GM12878 (cell line): ENCODE measurements at regions of chr1 and their contacts with region 1.

Region 1: GRCh38 chr1:216075339-216075738 is 347.9 kb downstream of the USH2A start:
- DNase-seq: no peak
- ATAC-seq: peak; percentile 68
- H3K4me3 ChIP-seq: no peak overlapping the region
- H3K27ac ChIP-seq: no peak overlapping the region
- H3K4me1 ChIP-seq: no peaks in the 10 kb centered on the region
- H3K27me3 ChIP-seq: no peaks in the 10 kb centered on the region
- CTCF ChIP-seq: no peak
- EP300 ChIP-seq: no peak
- POLR2A ChIP-seq: no peak
- RAD21 ChIP-seq: no peak

Region 2: DNA sequence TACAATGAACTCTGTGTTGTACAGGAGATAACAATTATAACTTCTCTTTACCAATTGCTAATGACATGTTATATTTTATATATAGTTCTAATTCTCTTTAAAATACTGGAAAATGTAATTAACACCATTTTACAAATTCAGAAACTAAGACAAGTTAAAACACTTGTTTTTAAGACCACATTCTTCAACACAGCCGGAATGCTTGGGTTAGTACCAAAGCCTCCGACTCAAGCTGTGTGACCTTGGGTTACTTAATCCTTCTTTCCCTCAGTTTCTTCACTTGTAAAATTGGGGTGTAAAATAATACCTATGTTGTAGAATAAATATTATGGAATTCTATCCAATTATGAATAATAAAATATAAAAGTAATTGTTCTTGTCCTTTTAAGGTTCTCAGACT is 30.8 kb before region 1 on chr1:
- CTCF ChIA-PET with region 1: no interaction called
- POLR2A ChIA-PET with region 1: no interaction called
- RAD21 ChIA-PET with region 1: no interaction called
- SMC1A ChIA-PET with region 1: no interaction called
- in situ Hi-C with region 1: no loop called
- intact Hi-C with region 1: no loop called
- DNase-seq: no peak
- ATAC-seq: no peak
- H3K4me3 ChIP-seq: no peak overlapping the region
- H3K27ac ChIP-seq: no peak overlapping the region
- H3K4me1 ChIP-seq: no peaks in the 10 kb centered on the region
- H3K27me3 ChIP-seq: no peaks in the 10 kb centered on the region
- CTCF ChIP-seq: no peak
- EP300 ChIP-seq: no peak
- POLR2A ChIP-seq: no peak
- RAD21 ChIP-seq: no peak

Region 3: DNA sequence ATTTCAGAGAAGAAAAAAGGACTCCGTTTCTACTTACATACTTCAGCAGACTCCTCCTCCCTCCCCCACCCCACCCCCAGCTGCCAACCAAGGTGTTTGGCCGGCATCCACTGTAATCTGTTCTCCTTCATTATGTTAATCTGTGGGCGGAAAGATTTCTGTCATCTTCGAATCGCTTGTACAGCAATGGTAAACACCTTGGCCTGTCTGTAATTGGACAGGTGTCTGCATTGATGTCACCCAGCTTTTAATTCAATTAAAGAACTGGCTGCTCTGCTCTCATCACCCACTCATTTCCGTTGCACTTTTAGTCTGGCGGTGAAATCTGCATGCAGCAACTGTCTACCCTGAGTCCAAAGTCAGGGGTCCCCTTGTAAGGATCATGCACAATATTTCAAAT is 20.7 kb before region 1 on chr1:
- CTCF ChIA-PET with region 1: interaction called, 3 read pairs
- POLR2A ChIA-PET with region 1: interaction called, 4 read pairs
- RAD21 ChIA-PET with region 1: interaction called, 12 read pairs
- SMC1A ChIA-PET with region 1: no interaction called
- in situ Hi-C with region 1: no loop called
- intact Hi-C with region 1: no loop called
- DNase-seq: no peak
- ATAC-seq: peak; percentile 78
- H3K4me3 ChIP-seq: no peak overlapping the region
- H3K27ac ChIP-seq: no peak overlapping the region
- H3K4me1 ChIP-seq: no peaks in the 10 kb centered on the region
- H3K27me3 ChIP-seq: no peaks in the 10 kb centered on the region
- CTCF ChIP-seq: no peak
- EP300 ChIP-seq: no peak
- POLR2A ChIP-seq: no peak
- RAD21 ChIP-seq: no peak

Region 4: DNA sequence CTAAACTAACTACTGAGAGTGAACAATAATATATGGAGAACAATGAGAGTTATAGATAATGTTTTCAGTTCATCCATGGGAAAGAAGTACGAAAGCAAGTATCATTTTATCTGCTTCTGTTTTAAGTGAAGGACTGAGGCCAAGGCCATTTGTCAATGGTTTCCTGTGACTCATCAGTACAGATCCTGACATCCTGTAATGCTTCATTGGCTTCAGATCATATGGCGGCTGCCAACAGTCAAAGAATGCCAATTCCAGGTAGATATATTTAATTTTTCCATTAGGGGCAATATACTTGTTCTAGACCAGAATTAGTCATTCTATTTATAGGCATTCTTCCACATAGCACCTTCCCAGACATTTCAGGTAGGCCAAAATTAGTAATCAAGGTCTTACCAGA is 250.6 kb after region 1 on chr1:
- CTCF ChIA-PET with region 1: no interaction called
- POLR2A ChIA-PET with region 1: no interaction called
- RAD21 ChIA-PET with region 1: no interaction called
- SMC1A ChIA-PET with region 1: no interaction called
- in situ Hi-C with region 1: no loop called
- intact Hi-C with region 1: no loop called
- DNase-seq: no peak
- ATAC-seq: no peak
- H3K4me3 ChIP-seq: no peak overlapping the region
- H3K27ac ChIP-seq: no peak overlapping the region
- H3K4me1 ChIP-seq: no peaks in the 10 kb centered on the region
- H3K27me3 ChIP-seq: no peaks in the 10 kb centered on the region
- CTCF ChIP-seq: no peak
- EP300 ChIP-seq: no peak
- POLR2A ChIP-seq: no peak
- RAD21 ChIP-seq: no peak